ENCODE measurements at regions of chr21 and their contacts with region 1.

Region 1: DNA sequence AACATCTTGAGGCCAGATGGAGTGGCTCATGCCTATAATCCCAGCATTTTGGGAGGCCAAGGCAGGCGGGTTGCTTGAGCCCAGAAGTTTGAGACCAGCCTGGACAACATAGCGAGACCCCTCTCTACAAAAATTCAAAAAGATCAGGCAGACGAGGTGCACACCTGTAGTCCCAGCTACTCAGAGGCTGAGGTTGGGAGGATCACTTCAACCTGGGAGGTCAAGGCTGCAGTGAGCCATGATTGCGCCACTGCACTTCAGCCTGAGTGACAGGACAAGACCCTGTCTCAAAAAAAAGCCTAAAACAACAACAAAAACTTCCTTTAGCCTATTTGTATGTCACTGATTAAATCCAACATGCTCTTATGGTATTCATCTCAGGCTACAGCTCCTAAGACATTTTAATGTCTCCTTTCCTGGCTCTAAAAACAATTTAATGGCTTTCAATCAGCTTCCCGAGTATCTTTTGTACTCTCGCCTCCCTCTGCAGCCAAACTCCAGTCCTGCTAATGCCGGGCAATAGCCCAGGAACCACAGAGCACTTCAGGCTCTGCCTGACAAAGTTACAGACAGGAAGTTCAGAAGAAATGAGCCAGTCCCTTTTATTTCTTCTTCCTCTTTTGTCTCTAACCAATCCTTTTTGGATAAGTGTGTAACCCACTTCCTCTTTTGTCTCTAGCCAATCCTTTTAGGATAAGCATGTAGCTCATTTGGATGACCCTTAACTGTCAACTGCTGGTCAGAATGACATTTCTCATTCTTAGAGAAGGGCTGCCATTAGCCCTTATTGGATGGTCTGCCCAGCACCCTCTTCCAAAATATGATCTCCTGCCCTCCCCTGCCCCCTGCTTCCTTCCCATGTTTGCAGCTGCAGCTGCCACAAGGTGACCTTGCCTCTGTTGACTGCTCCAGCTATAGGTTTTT is 6.6 kb upstream of the DOP1B start:
- DNase-seq: peak in 1 of 2 donors; percentile 79
- ATAC-seq: peak; percentile 83
- H3K4me3 ChIP-seq: no peak overlapping the region
- H3K27ac ChIP-seq: peak overlapping the region; percentile 42 to 72
- H3K4me1 ChIP-seq: peaks cover 0 to 2% of the 10 kb centered on the region in 2 donors
- H3K27me3 ChIP-seq: no peaks in the 10 kb centered on the region

Region 2: GRCh38 chr21:36188081-36188681 is 38.1 kb after region 1 on chr21:
- intact Hi-C with region 1: no loop called
- DNase-seq: peak in 1 of 2 donors; percentile 55
- ATAC-seq: no peak
- H3K4me3 ChIP-seq: no peak overlapping the region
- H3K27ac ChIP-seq: no peak overlapping the region
- H3K4me1 ChIP-seq: no peaks in the 10 kb centered on the region
- H3K27me3 ChIP-seq: no peaks in the 10 kb centered on the region

Region 3: DNA sequence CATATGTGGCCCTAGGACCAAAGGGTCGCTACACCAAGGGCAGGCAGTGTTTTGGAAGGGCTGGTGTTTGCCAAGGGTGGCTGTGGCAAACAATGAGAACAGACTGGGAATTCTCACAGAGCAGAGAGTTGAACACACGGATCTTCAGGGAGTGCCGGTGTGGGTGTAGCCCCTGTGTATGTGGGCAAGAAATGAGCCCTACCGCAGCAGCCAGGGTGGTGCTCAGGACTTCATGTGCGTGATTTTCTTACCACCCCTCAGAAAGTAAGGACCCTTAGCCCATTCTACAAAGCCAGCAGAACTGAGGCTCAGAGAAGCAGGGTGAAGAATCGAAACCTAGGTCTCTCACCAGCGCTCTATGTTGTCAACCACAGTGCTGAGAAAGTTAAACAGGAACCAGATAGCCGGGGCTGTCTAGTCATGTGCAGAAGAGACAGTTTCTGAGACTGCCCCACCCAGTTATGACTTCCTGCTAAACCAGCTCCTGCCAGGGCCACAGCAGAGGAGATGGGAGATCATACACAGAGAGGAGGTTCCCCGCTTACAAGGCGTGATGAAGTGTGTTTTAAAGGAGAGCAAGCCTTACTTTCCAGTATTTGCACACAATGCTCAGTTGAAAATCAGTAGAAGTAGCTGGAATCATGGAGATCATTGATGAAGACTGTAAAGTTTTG is 148.0 kb after region 1 on chr21:
- intact Hi-C with region 1: no loop called
- DNase-seq: peak; percentile 36 to 66
- ATAC-seq: peak; percentile 46
- H3K4me3 ChIP-seq: no peak overlapping the region
- H3K27ac ChIP-seq: no peak overlapping the region
- H3K4me1 ChIP-seq: no peaks in the 10 kb centered on the region
- H3K27me3 ChIP-seq: no peaks in the 10 kb centered on the region

Region 4: DNA sequence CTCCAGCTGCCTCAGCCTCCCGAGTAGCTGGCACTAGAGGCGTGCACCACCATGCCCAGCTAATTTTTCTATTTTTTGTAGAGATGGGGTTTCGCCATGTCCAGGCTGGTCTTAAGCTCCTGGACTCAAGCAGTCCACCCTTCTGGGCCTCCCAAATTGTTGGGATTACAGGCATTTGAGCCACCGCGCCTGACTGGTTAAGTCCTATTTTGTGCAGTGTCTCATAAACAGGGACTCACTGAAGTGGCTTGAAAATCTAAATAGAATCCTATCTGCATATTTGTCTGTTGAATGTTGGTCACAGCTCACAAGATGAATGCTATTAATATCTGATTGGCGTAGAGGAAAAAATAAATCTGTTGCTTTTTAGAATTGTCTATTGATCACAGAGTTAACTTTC is 229.2 kb after region 1 on chr21:
- intact Hi-C with region 1: loop called in 1 of 2 experiments (anchors 5 kb)
- DNase-seq: no peak
- ATAC-seq: no peak
- H3K4me3 ChIP-seq: no peak overlapping the region
- H3K27ac ChIP-seq: no peak overlapping the region
- H3K4me1 ChIP-seq: no peaks in the 10 kb centered on the region
- H3K27me3 ChIP-seq: no peaks in the 10 kb centered on the region